ENCODE measurements at regions of chr11 and their contacts with region 1.

Region 1: DNA sequence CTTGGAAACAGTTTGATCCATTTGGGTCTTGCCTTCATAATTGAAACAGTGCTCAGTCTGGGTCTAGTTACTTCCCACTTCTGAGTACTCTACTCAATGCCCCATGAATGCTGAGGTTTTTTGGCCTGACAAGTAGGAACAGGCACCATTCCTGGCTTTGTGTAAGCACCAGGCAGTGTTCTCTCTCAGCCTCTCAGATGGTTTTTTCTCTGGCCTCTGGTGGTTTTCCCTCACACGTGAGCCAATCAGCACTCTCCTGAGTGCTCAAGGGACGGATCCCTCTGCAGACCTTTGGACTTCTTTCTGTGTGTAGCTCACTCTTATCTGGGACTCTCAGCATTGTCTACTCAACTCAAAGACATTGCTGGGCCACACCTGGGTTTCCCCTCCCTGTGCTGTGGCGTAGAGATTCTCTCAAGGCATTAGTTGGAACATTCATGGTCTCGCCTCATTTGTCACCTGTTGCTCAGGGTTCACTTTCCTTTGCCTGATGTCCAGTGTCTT is 21.3 kb downstream of the SIK2 start:
- DNase-seq: no peak
- H3K4me3 ChIP-seq: no peak overlapping the region
- H3K27ac ChIP-seq: no peak overlapping the region
- H3K4me1 ChIP-seq: no peaks in the 10 kb centered on the region
- H3K27me3 ChIP-seq: no peaks in the 10 kb centered on the region
- CTCF ChIP-seq: no peak
- POLR2A ChIP-seq: no peak

Region 2: DNA sequence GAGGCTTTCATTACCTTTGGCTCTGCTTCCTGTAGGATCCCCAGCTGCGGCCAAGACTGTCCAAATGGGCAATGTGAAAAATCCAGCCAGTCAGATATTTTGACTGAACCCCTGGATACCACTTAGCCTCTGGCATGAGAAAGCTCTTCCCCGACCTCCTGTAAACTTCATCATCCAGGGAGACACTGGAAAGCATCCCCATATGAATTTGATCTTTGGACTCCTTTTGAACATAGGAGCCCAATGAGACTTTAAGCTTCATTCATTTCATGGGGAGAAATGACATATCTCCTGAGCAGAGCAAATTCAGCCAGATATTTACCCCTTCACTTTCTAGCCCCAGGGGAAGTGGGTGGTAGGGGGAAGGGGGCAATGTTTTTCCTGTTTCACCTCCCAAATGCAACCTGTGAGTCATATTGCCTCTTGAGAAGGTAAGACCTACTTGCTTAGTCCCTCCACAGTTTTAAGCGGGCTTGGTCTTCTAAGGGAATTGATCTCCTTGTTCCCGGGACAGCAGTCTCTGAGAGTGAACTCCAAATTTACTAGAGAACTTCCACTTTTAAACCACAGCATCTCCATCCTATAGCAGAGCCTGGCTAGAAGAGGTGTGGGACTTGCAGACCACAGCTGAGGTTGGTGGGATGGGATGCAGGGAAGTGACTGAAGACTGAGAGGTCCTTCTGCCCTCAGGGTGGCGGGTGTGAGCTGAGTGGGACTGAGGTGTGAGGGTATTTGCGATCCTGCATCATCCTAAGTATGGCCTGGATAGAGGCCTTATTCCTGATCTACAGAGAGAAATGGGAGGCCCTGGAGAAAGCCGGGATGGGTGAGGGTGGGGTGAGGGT is 224.2 kb before region 1 on chr11:
- intact Hi-C with region 1: no loop called
- DNase-seq: no peak
- H3K4me3 ChIP-seq: no peak overlapping the region
- H3K27ac ChIP-seq: no peak overlapping the region
- H3K4me1 ChIP-seq: no peaks in the 10 kb centered on the region
- H3K27me3 ChIP-seq: no peaks in the 10 kb centered on the region
- CTCF ChIP-seq: no peak
- POLR2A ChIP-seq: no peak

Region 3: DNA sequence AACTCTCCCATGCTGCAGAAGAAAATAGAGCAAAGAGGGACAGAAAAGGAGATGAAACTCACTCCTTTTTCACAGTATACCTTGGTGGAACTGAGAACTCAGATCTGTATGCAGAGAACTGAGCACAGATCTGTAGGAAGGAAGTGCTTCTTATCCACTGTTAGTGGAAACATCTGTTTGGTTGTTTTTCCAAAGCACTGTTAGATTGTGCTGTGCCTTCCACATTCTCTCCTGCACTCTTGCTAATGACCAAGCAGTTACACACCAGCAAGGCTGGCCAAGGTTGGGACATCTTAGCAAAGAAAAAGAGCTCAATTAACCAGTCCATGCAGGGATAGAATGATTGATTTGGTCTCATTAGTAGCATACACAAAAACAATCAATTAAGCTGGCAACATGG is 41.4 kb before region 1 on chr11:
- intact Hi-C with region 1: no loop called
- DNase-seq: no peak
- H3K4me3 ChIP-seq: no peak overlapping the region
- H3K27ac ChIP-seq: no peak overlapping the region
- H3K4me1 ChIP-seq: no peaks in the 10 kb centered on the region
- H3K27me3 ChIP-seq: no peaks in the 10 kb centered on the region
- CTCF ChIP-seq: no peak
- POLR2A ChIP-seq: no peak

Region 4: GRCh38 chr11:111676878-111677585 is 53.5 kb after region 1 on chr11:
- intact Hi-C with region 1: loop called in 1 of 2 experiments (anchors 10 kb)
- DNase-seq: no peak
- H3K4me3 ChIP-seq: no peak overlapping the region
- H3K27ac ChIP-seq: no peak overlapping the region
- H3K4me1 ChIP-seq: peaks cover 5 to 8% of the 10 kb centered on the region in 2 donors
- H3K27me3 ChIP-seq: no peaks in the 10 kb centered on the region
- CTCF ChIP-seq: no peak
- POLR2A ChIP-seq: no peak

Region 5: DNA sequence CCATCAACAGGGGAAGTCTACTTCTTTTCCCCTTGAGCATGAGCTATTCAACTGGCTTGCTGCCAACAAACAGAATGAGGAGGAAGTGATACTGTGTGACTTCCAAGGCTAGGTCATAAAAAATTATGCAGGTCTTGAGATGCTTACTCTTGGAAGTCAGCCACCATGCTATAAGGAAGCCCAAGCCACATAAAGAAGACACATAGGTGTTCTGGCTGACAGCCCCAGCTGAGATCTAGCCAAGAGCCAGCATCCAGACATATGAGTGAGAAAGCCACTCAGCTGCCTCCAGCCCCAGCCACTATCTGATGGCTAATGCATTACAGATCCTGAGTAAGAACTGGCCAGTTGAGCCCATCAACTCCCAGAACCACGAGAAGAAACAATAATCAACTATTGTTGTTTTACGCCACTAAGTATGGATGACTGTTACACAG is 173.6 kb after region 1 on chr11:
- intact Hi-C with region 1: no loop called
- DNase-seq: peak in 2 of 7 donors; percentile 26 to 32
- H3K4me3 ChIP-seq: no peak overlapping the region
- H3K27ac ChIP-seq: no peak overlapping the region
- H3K4me1 ChIP-seq: peaks cover 4 to 27% of the 10 kb centered on the region in 2 donors
- H3K27me3 ChIP-seq: no peaks in the 10 kb centered on the region
- CTCF ChIP-seq: no peak
- POLR2A ChIP-seq: no peak